B cell (primary cell): ENCODE measurements at regions of chr2 and their contacts with region 1.

Region 1: DNA sequence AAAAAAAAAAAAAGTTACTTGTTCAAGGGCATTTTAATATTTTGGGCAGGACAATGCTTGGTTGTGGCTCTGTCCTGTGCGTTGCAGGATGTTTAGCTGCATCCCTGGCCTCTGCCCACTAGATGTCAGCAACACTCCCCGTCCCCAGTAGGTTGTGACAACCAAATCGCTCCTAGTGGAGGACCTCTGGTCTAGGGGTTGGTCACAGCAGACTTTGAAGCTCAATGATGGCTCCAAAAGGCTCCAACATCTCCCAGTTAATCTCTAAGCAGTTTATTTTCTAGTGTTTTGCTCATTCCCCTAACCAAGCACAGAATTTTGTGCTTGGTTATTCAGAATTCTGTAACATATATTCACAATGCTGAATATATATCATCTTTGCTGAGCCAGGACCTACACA is 67.0 kb downstream of the CHRNA1 start:
- DNase-seq: peak; percentile 73
- ATAC-seq: peak; percentile 92
- H3K4me3 ChIP-seq: no peak overlapping the region
- H3K4me3 Mint-ChIP-seq: no peak overlapping the region
- H3K27ac ChIP-seq: no peak overlapping the region
- H3K27ac Mint-ChIP-seq: no peak overlapping the region
- H3K4me1 ChIP-seq: no peaks in the 10 kb centered on the region
- H3K4me1 Mint-ChIP-seq: no peaks in the 10 kb centered on the region
- H3K27me3 ChIP-seq: peaks cover 0 to 18% (median 0%) of the 10 kb centered on the region in 4 experiments
- H3K27me3 Mint-ChIP-seq: peaks cover 16% of the 10 kb centered on the region
- CTCF ChIP-seq: peak; percentile 84

Region 2: DNA sequence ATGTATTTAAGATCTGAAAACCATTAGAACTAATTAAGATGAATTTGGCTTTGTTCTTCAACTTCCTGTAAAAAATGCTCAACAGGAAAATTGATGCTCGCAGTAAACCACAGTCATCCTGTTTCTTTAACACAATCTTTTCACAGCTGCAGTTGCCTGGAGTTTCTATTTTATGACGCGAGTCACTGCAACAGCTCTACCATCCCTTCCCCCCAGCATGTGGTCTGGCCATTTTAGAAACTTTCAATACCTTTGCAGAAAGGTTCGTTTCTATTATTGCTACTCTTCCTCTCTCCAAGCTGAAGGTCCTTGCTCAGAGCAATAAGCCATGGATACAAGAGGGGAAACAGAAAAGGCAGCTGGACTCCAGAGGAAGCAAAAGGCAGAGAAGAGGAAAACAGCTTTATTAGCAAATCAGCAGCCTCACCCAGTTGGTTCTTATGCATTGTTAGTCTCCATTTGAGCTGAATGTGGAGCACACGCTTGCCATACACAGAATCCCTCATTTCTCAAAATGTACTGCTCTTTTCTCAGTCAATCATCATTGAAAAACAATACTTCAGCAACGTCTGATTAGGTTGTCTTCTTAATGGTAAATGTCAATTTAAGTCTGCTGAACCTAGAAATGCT is 103.6 kb before region 1 on chr2:
- CTCF ChIA-PET with region 1: interaction called, 11 read pairs
- POLR2A ChIA-PET with region 1: no interaction called
- intact Hi-C with region 1: no loop called
- DNase-seq: peak; percentile 88
- ATAC-seq: peak; percentile 66
- H3K4me3 ChIP-seq: peak overlapping the region; percentile 53 to 92 (median 71)
- H3K4me3 Mint-ChIP-seq: peak overlapping the region; percentile 93
- H3K27ac ChIP-seq: peak overlapping the region; percentile 93 to 98
- H3K27ac Mint-ChIP-seq: peak overlapping the region; percentile 96
- H3K4me1 ChIP-seq: peaks cover 63 to 65% of the 10 kb centered on the region in 2 donors
- H3K4me1 Mint-ChIP-seq: peaks cover 65% of the 10 kb centered on the region
- H3K27me3 ChIP-seq: no peaks in the 10 kb centered on the region
- H3K27me3 Mint-ChIP-seq: no peaks in the 10 kb centered on the region
- CTCF ChIP-seq: no peak

Region 3: DNA sequence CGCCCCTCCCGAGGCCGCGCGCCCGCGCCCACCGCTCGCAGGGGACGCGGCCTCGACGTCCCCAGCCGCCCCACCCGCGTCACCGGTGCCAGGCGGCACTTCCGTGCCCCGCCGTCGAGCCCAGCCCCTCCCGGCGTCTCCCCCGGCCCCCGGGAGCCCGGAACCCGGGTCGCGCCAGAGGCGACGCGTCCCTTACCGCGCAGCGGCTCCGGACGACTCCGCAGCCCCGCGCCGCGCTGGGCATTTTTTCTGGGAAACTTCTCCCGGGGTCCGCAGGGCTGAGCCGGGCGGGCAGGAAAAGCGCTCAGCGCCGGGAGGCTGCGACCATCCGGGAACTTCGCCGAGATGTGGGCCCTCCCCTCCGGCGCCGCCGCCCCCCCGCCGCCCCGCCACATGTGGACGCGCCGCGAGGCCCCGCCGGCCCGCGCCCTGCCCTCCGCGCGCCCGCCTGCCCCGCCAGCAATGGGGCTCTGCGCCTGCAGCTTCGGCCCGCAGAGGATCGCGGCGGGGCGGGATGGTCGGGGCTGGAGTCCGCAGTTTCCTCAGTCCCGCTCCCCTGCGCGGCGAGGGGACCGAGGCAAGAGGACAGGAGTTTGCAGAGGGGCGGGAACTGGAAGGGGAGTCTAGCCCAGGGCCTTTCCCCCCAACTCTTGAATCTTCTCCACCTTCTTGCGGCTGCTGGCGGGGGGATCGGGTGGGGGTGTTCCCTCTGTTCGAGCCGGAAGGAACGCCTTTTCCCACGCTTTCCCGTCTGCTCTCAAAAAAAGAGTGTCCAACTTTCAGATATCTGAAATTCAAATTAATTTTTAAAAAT is 14.5 kb before region 1 on chr2:
- CTCF ChIA-PET with region 1: interaction called, 110 read pairs
- POLR2A ChIA-PET with region 1: no interaction called
- intact Hi-C with region 1: no loop called
- DNase-seq: peak; percentile 72
- ATAC-seq: peak; percentile 70
- H3K4me3 ChIP-seq: peak overlapping the region; percentile 67 to 87 (median 72)
- H3K4me3 Mint-ChIP-seq: peak overlapping the region; percentile 93
- H3K27ac ChIP-seq: peak overlapping the region in 1 of 2 donors; percentile 67
- H3K27ac Mint-ChIP-seq: peak overlapping the region; percentile 86
- H3K4me1 ChIP-seq: peaks cover 8 to 14% of the 10 kb centered on the region in 2 donors
- H3K4me1 Mint-ChIP-seq: peaks cover 21% of the 10 kb centered on the region
- H3K27me3 ChIP-seq: no peaks in the 10 kb centered on the region
- H3K27me3 Mint-ChIP-seq: no peaks in the 10 kb centered on the region
- CTCF ChIP-seq: no peak

Region 4: DNA sequence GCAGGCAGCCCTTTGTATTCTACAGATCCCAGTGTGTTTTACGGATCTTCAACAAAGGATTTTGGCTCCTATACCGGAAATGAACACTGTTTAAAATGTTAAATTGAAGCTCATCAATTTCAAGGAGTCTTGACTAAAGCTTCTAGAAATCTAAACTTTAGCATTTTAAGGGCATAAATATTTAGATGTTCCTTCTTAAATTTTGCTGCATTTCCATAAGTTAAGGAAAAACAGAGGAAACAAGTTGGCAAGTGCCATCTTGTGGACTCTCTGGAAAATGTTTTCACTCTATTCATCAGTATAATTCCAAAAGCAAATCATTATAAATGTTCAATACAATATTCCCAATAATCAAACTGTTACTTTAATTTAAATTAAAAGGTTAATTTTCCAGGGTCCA is 288.4 kb after region 1 on chr2:
- CTCF ChIA-PET with region 1: interaction called, 9 read pairs
- POLR2A ChIA-PET with region 1: no interaction called
- intact Hi-C with region 1: loop called (anchors 1 kb)
- DNase-seq: no peak
- ATAC-seq: no peak
- H3K4me3 ChIP-seq: no peak overlapping the region
- H3K4me3 Mint-ChIP-seq: no peak overlapping the region
- H3K27ac ChIP-seq: no peak overlapping the region
- H3K27ac Mint-ChIP-seq: no peak overlapping the region
- H3K4me1 ChIP-seq: no peaks in the 10 kb centered on the region
- H3K4me1 Mint-ChIP-seq: peaks cover 2% of the 10 kb centered on the region
- H3K27me3 ChIP-seq: peaks cover 0 to 3% (median 2%) of the 10 kb centered on the region in 4 experiments
- H3K27me3 Mint-ChIP-seq: peaks cover 18% of the 10 kb centered on the region
- CTCF ChIP-seq: no peak

Region 5: GRCh38 chr2:175282290-175282689 is 585.0 kb after region 1 on chr2:
- CTCF ChIA-PET with region 1: interaction called, 3 read pairs
- POLR2A ChIA-PET with region 1: no interaction called
- intact Hi-C with region 1: loop called (anchors 10 kb)
- DNase-seq: peak; percentile 35
- ATAC-seq: no peak
- H3K4me3 ChIP-seq: no peak overlapping the region
- H3K4me3 Mint-ChIP-seq: no peak overlapping the region
- H3K27ac ChIP-seq: no peak overlapping the region
- H3K27ac Mint-ChIP-seq: no peak overlapping the region
- H3K4me1 ChIP-seq: no peaks in the 10 kb centered on the region
- H3K4me1 Mint-ChIP-seq: no peaks in the 10 kb centered on the region
- H3K27me3 ChIP-seq: no peaks in the 10 kb centered on the region
- H3K27me3 Mint-ChIP-seq: peaks cover 4% of the 10 kb centered on the region
- CTCF ChIP-seq: peak; percentile 51